HepG2 (cell line): ENCODE measurements at regions of chr20 and their contacts with region 1.

Region 1: GRCh38 chr20:36591854-36592641 is 13.5 kb upstream of the RAB5IF start:
- DNase-seq: peak; percentile 73
- ATAC-seq: peak; percentile 57
- H3K4me3 ChIP-seq: no peak overlapping the region
- H3K27ac ChIP-seq: no peak overlapping the region
- H3K4me1 ChIP-seq: no peaks in the 10 kb centered on the region
- H3K27me3 ChIP-seq: no peaks in the 10 kb centered on the region
- CTCF ChIP-seq: peak; percentile 79
- EP300 ChIP-seq: no peak
- POLR2A ChIP-seq: no peak
- RAD21 ChIP-seq: peak; percentile 69

Region 2: DNA sequence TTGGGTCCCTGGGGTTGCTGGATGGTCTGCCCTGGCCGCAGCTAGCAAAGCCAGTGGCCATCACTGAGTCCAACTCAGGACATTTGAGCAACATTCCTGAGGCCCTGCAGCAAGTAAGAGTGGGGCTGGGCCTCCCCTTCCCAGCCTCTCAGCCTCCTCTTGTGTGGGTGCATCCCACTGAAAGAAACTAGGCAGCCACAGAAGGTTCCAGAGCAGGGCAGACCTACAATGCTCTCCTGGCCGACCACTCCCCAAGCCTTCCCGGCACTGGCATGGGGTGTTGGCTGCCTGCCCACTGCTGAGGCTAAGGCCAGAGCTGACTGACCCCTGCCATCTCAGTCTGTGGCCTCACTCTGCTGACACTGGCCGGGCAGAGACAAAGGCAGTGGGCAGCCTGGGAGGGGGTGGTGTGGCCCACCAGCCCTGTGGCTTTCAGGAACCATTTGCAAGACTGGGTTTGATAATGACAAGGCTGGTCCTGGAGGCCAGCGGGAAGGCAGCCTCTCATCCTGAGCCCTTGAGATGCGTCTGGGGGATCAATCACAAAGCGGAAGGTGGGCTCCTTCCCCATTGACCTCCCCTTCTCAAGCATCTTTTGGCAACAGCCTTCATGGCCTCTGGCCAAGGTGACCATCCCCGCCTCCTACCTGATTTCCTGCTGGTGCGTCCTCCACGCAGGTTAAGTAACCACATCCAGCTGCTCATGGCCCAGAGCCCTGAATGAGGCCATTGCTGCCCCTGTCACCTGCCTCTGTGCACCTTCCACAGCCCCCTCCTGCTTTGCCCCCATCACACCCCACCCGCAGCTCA is 276.3 kb before region 1 on chr20:
- CTCF ChIA-PET with region 1: no interaction called
- POLR2A ChIA-PET with region 1: no interaction called
- in situ Hi-C with region 1: no loop called
- intact Hi-C with region 1: no loop called
- DNase-seq: no peak
- ATAC-seq: peak; percentile 40
- H3K4me3 ChIP-seq: no peak overlapping the region
- H3K27ac ChIP-seq: no peak overlapping the region
- H3K4me1 ChIP-seq: no peaks in the 10 kb centered on the region
- H3K27me3 ChIP-seq: peaks cover 0 to 17% of the 10 kb centered on the region in 2 experiments; a peak in 3 of 5 replicates
- CTCF ChIP-seq: no peak
- EP300 ChIP-seq: no peak
- POLR2A ChIP-seq: no peak
- RAD21 ChIP-seq: no peak

Region 3: GRCh38 chr20:36491901-36492617 is 100.0 kb before region 1 on chr20:
- CTCF ChIA-PET with region 1: no interaction called
- POLR2A ChIA-PET with region 1: no interaction called
- in situ Hi-C with region 1: no loop called
- intact Hi-C with region 1: no loop called
- DNase-seq: no peak
- ATAC-seq: no peak; the same call in 2 of the 3 replicates
- H3K4me3 ChIP-seq: no peak overlapping the region
- H3K27ac ChIP-seq: no peak overlapping the region
- H3K4me1 ChIP-seq: peaks cover 15% of the 10 kb centered on the region
- H3K27me3 ChIP-seq: no peaks in the 10 kb centered on the region
- CTCF ChIP-seq: no peak
- EP300 ChIP-seq: no peak
- POLR2A ChIP-seq: no peak
- RAD21 ChIP-seq: no peak

Region 4: DNA sequence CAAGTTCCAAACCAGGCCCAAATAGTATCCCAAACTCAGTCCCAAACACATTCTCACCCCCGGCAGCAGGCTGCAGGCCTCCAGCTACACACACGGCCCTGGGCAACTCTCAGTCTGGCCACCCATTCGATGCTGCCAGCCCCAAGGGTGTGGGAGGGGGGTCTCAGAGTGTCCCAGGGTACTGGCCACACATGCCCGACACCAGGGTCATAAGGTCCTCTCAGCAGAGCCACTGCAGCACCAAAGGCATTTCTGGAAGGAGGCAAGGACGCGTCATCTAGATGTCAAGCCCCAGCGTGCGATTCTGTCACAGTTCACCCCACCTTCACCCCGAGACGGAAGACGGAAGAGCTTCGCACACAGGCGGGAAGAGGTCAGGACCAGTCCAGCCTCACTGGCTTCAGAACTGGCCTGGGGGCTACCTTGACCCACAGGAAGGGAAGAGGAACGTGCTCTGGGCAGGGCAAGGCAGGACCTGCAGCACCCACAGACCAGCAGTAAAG is 41.2 kb before region 1 on chr20:
- CTCF ChIA-PET with region 1: interaction called, 40 read pairs
- POLR2A ChIA-PET with region 1: interaction called, 3 read pairs
- in situ Hi-C with region 1: loop called (anchors 5 kb)
- intact Hi-C with region 1: loop called (anchors 1 kb)
- DNase-seq: no peak
- ATAC-seq: no peak
- H3K4me3 ChIP-seq: no peak overlapping the region; a peak in 1 of 6 replicates
- H3K27ac ChIP-seq: no peak overlapping the region
- H3K4me1 ChIP-seq: peaks cover 51% of the 10 kb centered on the region
- H3K27me3 ChIP-seq: no peaks in the 10 kb centered on the region
- CTCF ChIP-seq: no peak
- EP300 ChIP-seq: no peak
- POLR2A ChIP-seq: no peak
- RAD21 ChIP-seq: no peak

Region 5: GRCh38 chr20:36932476-36933426 is 340.7 kb after region 1 on chr20:
- CTCF ChIA-PET with region 1: no interaction called
- POLR2A ChIA-PET with region 1: no interaction called
- in situ Hi-C with region 1: no loop called
- intact Hi-C with region 1: no loop called
- DNase-seq: peak; percentile 76
- ATAC-seq: peak; percentile 75
- H3K4me3 ChIP-seq: no peak overlapping the region
- H3K27ac ChIP-seq: peak overlapping the region; percentile 36
- H3K4me1 ChIP-seq: peaks cover 52% of the 10 kb centered on the region
- H3K27me3 ChIP-seq: no peaks in the 10 kb centered on the region
- CTCF ChIP-seq: no peak
- EP300 ChIP-seq: peak in 1 of 2 experiments; percentile 5; a peak in 1 of 4 replicates
- POLR2A ChIP-seq: no peak
- RAD21 ChIP-seq: no peak